ENCODE measurements at regions of chr1 and their contacts with region 1.

Region 1: GRCh38 chr1:228109073-228109961 is at the start of gene MRPL55:
- DNase-seq: peak; percentile 99 to 100 (median 100)
- H3K4me3 ChIP-seq: peak within 1 kb of the TSS; percentile 71 to 100 (median 98)
- H3K27ac ChIP-seq: peak within 1 kb of the TSS; percentile 58 to 98 (median 88)
- H3K27me3 ChIP-seq: no peaks in the 10 kb centered on the region
- CTCF ChIP-seq: peak in 45 of 56 donors; percentile 13 to 65 (median 34)
- total RNA-seq, gene MRPL55: 31.4 to 79.7 (median 54.4) TPM

Region 2: GRCh38 chr1:228059634-228060457 is 49.5 kb before region 1 on chr1:
- intact Hi-C with region 1: no loop called
- DNase-seq: peak in 6 of 10 donors; percentile 2 to 35 (median 14)
- H3K4me3 ChIP-seq: peak overlapping the region in 2 of 59 donors; percentile 19 to 23
- H3K27ac ChIP-seq: no peak overlapping the region
- H3K27me3 ChIP-seq: peaks cover 3 to 94% (median 77%) of the 10 kb centered on the region in 45 donors
- CTCF ChIP-seq: no peak

Region 3: GRCh38 chr1:228070173-228070572 is 39.1 kb before region 1 on chr1:
- intact Hi-C with region 1: no loop called
- DNase-seq: no peak
- H3K4me3 ChIP-seq: no peak overlapping the region
- H3K27ac ChIP-seq: no peak overlapping the region
- H3K27me3 ChIP-seq: peaks cover 0 to 23% (median 18%) of the 10 kb centered on the region in 45 donors
- CTCF ChIP-seq: no peak

Region 4: DNA sequence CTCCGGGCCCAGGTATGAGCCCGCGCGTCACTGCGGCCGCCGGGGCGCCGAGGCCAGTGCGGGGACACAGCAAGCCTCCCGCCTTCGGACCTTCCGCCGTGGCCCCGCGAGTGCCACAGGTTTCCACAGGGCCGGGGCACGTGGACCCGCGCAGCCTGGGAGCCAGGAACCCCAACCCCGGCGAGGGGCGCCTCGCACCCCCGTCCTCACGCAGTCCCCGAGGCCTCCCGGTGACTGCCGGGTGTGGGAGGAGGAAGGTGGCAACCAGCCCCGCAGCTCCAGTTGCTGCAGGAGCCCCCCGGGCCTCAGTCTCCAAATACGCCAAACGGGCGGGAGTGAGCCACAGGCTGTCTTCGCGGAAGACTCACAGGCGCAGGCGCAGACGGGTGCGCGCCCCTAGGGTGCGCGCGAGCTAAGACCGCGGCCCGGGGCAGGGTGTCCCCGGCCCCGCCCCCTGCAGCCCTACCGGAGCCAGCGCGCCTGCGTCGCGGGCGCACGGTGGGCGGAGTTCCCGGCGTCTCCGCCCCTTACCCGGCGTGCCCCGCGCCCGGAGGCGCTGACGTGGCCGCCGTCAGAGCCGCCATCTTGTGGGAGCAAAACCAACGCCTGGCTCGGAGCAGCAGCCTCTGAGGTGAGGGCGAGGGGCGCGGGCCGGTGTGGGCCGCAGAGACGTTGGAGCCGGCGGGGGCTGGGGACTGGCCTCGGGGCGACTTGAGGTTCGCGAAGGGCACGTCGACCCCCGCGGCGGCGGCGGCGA is 27.0 kb before region 1 on chr1 and contains the start of gene ARF1:
- intact Hi-C with region 1: loop called (anchors 2 kb)
- DNase-seq: peak; percentile 79 to 95 (median 90)
- H3K4me3 ChIP-seq: peak within 1 kb of the TSS; percentile 64 to 100 (median 99)
- H3K27ac ChIP-seq: peak within 1 kb of the TSS; percentile 66 to 99 (median 96)
- H3K27me3 ChIP-seq: no peaks in the 10 kb centered on the region
- CTCF ChIP-seq: peak in 49 of 56 donors; percentile 10 to 71 (median 47)
- total RNA-seq, gene ARF1: 206 to 403 (median 322) TPM

Measured in dorsolateral prefrontal cortex (tissue), 120 donors.